ENCODE measurements at regions of chr19 and their contacts with region 1.

Region 1: GRCh38 chr19:49421039-49421877 is 2.0 kb downstream of the PTH2 start:
- DNase-seq: peak in 5 of 14 experiments; percentile 31 to 64 (median 57)
- ATAC-seq: peak; percentile 45
- H3K4me3 ChIP-seq: no peak overlapping the region
- H3K4me3 Mint-ChIP-seq: peak overlapping the region; percentile 79
- H3K27ac ChIP-seq: no peak overlapping the region
- H3K27ac Mint-ChIP-seq: no peak overlapping the region
- H3K4me1 ChIP-seq: peaks cover 45% of the 10 kb centered on the region
- H3K4me1 Mint-ChIP-seq: peaks cover 53% of the 10 kb centered on the region
- H3K27me3 ChIP-seq: peaks cover 65 to 82% of the 10 kb centered on the region in 2 experiments
- H3K27me3 Mint-ChIP-seq: peaks cover 79% of the 10 kb centered on the region
- CTCF ChIP-seq: no peak

Region 2: DNA sequence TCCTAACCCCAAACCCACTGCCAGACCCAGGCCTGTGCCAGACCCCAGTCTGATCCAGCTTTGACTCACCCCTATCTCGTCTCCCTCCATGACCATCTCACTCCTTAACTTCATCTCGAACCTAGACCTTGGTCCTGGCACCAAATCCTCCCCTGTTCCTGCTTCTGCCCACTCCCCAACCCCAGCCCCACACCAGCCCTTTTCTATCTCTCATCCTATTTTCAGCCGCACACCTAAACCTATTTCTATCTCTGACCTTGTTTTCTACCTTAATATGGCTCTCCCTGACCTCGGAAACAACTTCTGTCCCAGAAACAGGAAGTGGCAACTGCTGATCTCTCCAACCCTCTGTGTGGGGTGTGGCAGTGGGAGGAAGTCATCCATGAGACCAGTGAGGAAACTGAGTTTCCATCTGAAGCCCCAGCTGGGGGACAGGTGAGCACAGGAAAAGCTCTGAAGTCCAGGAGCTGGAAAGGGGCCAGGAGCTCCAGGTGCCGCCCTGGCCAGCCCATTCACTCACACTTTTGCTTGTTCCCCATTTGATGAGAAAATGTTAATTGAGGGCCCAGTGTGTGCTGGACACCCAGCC is 11.7 kb before region 1 on chr19:
- CTCF ChIA-PET with region 1: no interaction called
- POLR2A ChIA-PET with region 1: interaction called, 20 read pairs
- intact Hi-C with region 1: loop called in 1 of 2 experiments (anchors 2 kb)
- DNase-seq: peak in 4 of 14 experiments; percentile 42 to 75 (median 57)
- ATAC-seq: peak; percentile 61
- H3K4me3 ChIP-seq: peak overlapping the region; percentile 11
- H3K4me3 Mint-ChIP-seq: peak overlapping the region; percentile 49
- H3K27ac ChIP-seq: peak overlapping the region; percentile 17 to 65
- H3K27ac Mint-ChIP-seq: peak overlapping the region; percentile 82
- H3K4me1 ChIP-seq: peaks cover 72% of the 10 kb centered on the region
- H3K4me1 Mint-ChIP-seq: peaks cover 67% of the 10 kb centered on the region
- H3K27me3 ChIP-seq: no peaks in the 10 kb centered on the region
- H3K27me3 Mint-ChIP-seq: no peaks in the 10 kb centered on the region
- CTCF ChIP-seq: no peak